ENCODE measurements at regions of chr2 and their contacts with region 1.

Region 1: GRCh38 chr2:42810121-42810970 is 18.0 kb upstream of the HAAO start:
- DNase-seq: peak; percentile 86 to 99 (median 96)
- ATAC-seq: peak; percentile 76 to 79
- H3K4me3 Mint-ChIP-seq: peak overlapping the region; percentile 87 to 99 (median 96)
- H3K27ac Mint-ChIP-seq: peak overlapping the region; percentile 97 to 100 (median 99)
- H3K4me1 Mint-ChIP-seq: peaks cover 12 to 20% (median 17%) of the 10 kb centered on the region in 4 donors
- H3K27me3 Mint-ChIP-seq: peaks cover 0 to 2% (median 0%) of the 10 kb centered on the region in 5 donors

Region 2: DNA sequence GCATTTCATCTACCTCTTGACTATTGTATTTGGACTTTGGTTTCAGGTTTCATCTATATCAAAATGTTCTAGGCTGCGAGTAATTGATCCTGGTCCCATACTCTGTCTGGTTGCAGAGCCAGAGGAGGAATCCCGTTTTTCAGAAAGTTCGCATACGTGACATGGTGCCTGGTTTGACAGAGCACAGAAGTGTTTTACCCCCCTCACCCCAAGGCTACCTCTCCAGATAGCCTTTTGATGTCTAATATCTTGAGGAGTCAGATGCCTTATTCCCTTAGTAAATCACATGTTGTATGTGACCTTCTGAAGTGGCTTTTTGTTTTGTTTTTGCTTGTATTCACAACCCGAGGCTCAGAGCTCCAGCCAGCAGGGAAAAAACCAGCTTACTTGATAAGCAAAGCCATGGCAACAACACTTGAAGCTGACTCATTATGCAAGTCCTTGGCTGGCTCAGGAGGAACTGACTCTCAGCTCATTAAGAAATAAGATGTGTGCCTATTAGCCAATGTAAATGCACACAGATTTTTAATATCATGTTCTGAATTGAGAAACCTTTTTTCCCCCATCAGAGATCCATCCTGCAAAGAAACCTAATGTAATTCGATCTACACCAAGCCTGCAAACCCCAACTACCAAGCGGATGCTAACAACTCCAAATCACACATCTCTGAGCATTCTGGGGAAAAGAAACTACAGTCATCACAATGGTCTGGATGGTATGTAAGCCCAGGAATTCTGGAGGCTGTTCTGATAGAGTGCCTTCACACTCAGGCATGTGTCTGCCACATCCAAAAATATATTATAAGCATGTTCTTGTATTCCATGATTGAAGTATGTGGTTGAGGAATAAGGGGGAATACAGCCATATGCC is 87.8 kb before region 1 on chr2:
- POLR2A ChIA-PET with region 1: no interaction called
- DNase-seq: no peak
- ATAC-seq: no peak
- H3K4me3 Mint-ChIP-seq: no peak overlapping the region
- H3K27ac Mint-ChIP-seq: no peak overlapping the region
- H3K4me1 Mint-ChIP-seq: peaks cover 0 to 2% (median 0%) of the 10 kb centered on the region in 4 donors
- H3K27me3 Mint-ChIP-seq: no peaks in the 10 kb centered on the region

Region 3: DNA sequence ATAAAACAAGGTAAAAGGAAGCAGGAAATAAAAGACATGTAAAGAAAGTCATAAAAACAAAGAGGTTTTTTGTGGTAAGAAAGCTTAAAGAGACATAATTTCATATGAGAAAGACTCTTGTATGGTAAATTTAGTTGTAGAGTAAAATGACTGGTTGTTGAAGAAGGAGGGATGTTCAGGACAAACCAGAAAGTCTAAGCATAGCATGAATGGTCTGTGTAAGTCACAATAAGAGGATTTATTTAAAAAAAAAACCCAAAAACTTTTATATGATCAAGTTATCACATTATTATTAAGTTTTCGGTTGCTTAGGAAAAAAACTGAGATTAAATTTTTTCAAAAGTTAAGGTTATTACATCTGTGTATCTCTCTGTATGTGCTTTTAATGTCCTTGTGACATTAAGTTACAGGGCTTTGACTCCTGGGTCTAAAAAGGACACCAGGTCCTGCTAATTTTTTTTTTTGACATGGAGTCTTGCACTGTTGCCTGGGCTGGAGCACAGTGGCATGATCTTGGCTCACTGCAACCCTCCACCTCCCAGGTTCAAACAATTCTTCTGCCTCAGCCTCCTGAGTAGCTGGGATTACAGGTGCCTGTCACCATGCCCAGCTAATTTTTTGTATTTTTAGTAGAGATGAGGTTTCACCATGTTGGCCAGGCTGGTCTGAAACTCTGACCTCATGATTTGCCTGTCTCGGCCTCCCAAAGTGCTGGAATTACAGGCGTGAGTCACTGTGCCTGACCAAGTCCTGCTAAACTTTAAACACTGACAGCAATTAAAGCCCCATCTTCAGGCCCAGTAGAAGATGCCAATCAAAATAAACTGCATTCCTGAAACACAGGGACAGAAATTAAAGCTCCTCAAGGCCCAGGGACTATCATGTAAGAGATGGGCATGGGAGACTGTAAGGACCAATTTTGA is 32.2 kb before region 1 on chr2:
- POLR2A ChIA-PET with region 1: interaction called, 22 read pairs
- DNase-seq: no peak
- ATAC-seq: no peak
- H3K4me3 Mint-ChIP-seq: peak overlapping the region in 7 of 10 donors; percentile 5 to 41 (median 35)
- H3K27ac Mint-ChIP-seq: peak overlapping the region in 7 of 10 donors; percentile 2 to 69 (median 36)
- H3K4me1 Mint-ChIP-seq: peaks cover 12 to 37% (median 27%) of the 10 kb centered on the region in 4 donors
- H3K27me3 Mint-ChIP-seq: no peaks in the 10 kb centered on the region

Region 4: DNA sequence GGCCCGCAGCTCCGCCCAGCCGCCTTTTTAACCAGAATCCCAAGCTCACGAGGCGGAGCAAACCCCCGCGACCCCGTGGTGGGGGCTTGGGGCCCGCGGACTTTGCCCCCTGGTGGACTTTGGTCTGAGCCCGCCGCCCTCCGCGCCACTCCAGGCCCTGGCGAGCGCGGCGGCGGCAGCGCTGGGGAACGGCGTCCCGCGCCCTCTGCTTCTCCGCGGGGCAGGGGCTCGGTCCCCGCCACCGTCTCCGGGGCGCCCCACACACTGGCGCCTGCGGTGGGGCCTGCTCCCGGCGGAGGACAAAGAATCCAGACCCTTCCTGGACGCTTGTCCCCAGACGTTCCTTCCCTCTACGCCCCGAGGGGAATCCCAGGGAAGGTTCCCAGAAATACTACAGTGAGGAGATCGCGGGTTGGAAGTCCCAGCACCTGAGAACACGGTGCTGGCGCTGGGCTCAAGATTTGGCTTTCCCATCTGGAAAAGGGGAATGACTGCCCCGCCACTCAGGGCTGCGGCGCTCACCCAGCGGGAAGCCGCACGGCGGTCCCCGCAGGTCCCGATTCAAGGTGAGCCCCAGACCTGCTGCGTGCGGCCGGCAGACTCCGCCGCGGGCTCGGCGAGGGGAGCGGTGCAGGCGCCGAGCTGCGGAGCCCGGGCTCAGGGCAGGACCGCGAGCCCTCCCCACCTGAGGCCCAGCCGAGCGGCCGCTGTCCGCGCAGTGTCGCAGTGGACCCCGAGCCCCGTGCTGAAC is 17.6 kb before region 1 on chr2 and contains the start of gene HAAO:
- POLR2A ChIA-PET with region 1: interaction called, 29 read pairs
- DNase-seq: peak in 4 of 10 donors; percentile 9 to 22 (median 20)
- ATAC-seq: peak; percentile 70 to 83
- H3K4me3 Mint-ChIP-seq: peak within 1 kb of the TSS; percentile 66 to 91 (median 84)
- H3K27ac Mint-ChIP-seq: peak within 1 kb of the TSS in 7 of 10 donors; percentile 44 to 84 (median 75)
- H3K4me1 Mint-ChIP-seq: peaks cover 26 to 37% (median 31%) of the 10 kb centered on the region in 4 donors
- H3K27me3 Mint-ChIP-seq: peaks cover 13 to 42% (median 23%) of the 10 kb centered on the region in 5 donors
- polyA plus RNA-seq, gene HAAO: 0.25 to 0.80 (median 0.47) TPM

Region 5: GRCh38 chr2:42839809-42840501 is 29.6 kb after region 1 on chr2:
- POLR2A ChIA-PET with region 1: no interaction called
- DNase-seq: no peak
- ATAC-seq: no peak
- H3K4me3 Mint-ChIP-seq: no peak overlapping the region
- H3K27ac Mint-ChIP-seq: no peak overlapping the region
- H3K4me1 Mint-ChIP-seq: no peaks in the 10 kb centered on the region
- H3K27me3 Mint-ChIP-seq: no peaks in the 10 kb centered on the region

Region 6: GRCh38 chr2:42854207-42854818 is 44.0 kb after region 1 on chr2:
- POLR2A ChIA-PET with region 1: no interaction called
- DNase-seq: no peak
- ATAC-seq: no peak
- H3K4me3 Mint-ChIP-seq: no peak overlapping the region
- H3K27ac Mint-ChIP-seq: no peak overlapping the region
- H3K4me1 Mint-ChIP-seq: peaks cover 0 to 3% (median 0%) of the 10 kb centered on the region in 4 donors
- H3K27me3 Mint-ChIP-seq: no peaks in the 10 kb centered on the region

Region 7: GRCh38 chr2:43219383-43220228 is 409.3 kb after region 1 on chr2:
- POLR2A ChIA-PET with region 1: interaction called, 12 read pairs
- DNase-seq: peak; percentile 52 to 93 (median 86)
- ATAC-seq: peak; percentile 45 to 60
- H3K4me3 Mint-ChIP-seq: peak overlapping the region; percentile 71 to 99 (median 96)
- H3K27ac Mint-ChIP-seq: peak overlapping the region; percentile 91 to 99 (median 98)
- H3K4me1 Mint-ChIP-seq: peaks cover 32 to 61% (median 49%) of the 10 kb centered on the region in 4 donors
- H3K27me3 Mint-ChIP-seq: peaks cover 0 to 3% (median 0%) of the 10 kb centered on the region in 5 donors

Region 8: DNA sequence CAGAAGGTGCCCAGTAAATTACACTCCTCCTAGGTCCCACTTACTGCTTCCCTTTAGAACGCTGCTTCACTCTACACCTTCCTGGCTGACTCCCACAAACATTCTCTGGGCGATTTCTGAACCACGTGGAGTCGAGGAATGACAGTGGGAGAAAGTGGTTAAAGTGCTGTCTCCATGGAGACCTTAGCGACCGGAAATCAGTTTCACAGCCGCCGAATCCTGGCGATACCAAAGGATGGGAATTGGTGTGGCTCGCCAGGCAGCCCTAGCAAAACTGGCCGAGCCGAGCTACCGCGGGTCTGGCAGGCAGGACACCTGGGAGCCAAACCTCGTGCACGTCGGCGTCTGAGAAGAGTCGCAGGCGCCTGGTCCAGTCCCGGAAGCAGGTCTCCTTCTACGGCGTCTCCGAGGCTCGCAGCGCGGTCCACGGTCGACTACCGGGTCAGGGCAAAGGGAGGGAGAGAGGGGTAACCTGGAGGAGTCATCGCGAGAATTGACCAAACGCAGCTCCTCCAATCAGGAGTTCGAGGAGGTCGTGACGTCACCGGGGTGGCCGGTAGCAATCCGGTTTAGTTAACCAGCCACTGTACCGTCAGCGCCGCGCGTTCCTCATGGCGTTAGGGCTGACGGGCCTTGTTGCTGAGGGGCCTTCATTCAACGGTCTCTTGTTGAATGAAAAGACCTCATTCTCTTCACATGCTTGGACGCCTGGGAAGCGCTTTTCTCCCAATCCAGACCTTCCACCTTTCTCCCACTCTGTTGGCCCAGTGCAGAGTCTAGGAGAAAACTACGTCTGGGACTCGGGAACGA is 785.5 kb after region 1 on chr2 and contains the start of gene THADA:
- POLR2A ChIA-PET with region 1: interaction called, 20 read pairs
- DNase-seq: peak; percentile 82 to 98 (median 95)
- ATAC-seq: peak; percentile 92 to 95
- H3K4me3 Mint-ChIP-seq: peak within 1 kb of the TSS; percentile 89 to 97 (median 96)
- H3K27ac Mint-ChIP-seq: peak within 1 kb of the TSS; percentile 96 to 99 (median 98)
- H3K4me1 Mint-ChIP-seq: peaks cover 17 to 41% (median 32%) of the 10 kb centered on the region in 4 donors
- H3K27me3 Mint-ChIP-seq: peaks cover 0 to 6% (median 3%) of the 10 kb centered on the region in 5 donors
- polyA plus RNA-seq, gene THADA: 9.2 to 15.5 (median 9.8) TPM

Region 9: DNA sequence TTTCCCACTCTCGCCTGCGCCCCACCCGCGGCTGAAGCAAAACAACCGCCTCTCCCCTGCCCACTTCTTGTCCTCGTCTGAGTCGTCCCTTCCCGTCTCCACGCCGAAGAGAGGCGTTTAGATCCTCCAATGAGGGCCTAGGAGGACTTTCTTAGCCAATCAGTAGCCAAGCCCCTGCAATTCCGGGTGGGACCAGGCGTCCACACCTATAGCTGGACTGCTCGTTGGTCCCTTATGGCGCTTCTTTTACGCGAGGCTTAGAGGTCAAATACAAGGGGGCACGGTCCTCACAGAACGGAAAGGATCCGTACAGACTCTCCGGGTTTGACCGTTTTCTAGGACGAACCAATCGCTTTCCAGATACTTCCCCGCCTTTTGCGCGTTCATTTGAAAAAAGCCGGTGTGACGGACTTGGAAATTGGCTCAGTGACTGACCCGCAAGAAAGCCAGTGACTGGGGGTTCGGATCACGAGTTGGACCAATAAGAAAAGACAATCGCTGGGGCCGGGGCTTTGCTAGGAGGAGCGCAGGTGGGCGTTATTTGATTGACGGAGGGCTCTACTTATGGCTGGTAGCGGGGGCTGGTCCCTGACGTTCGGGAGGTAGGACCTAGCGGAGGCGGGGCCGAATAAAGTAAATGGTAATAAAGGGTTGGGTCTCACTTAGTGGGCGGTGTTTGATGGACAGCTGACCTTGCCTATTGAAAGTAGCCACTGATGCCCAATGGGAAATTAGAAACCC is 1357.8 kb after region 1 on chr2:
- POLR2A ChIA-PET with region 1: interaction called, 11 read pairs
- DNase-seq: peak; percentile 85 to 100 (median 98)
- ATAC-seq: peak; percentile 78 to 81
- H3K4me3 Mint-ChIP-seq: peak overlapping the region; percentile 88 to 100 (median 98)
- H3K27ac Mint-ChIP-seq: peak overlapping the region; percentile 98 to 100 (median 100)
- H3K4me1 Mint-ChIP-seq: peaks cover 13 to 42% (median 36%) of the 10 kb centered on the region in 4 donors
- H3K27me3 Mint-ChIP-seq: no peaks in the 10 kb centered on the region